CD4-positive, alpha-beta memory T cell (primary cell): ENCODE measurements at regions of chr13 and their contacts with region 1.

Region 1: DNA sequence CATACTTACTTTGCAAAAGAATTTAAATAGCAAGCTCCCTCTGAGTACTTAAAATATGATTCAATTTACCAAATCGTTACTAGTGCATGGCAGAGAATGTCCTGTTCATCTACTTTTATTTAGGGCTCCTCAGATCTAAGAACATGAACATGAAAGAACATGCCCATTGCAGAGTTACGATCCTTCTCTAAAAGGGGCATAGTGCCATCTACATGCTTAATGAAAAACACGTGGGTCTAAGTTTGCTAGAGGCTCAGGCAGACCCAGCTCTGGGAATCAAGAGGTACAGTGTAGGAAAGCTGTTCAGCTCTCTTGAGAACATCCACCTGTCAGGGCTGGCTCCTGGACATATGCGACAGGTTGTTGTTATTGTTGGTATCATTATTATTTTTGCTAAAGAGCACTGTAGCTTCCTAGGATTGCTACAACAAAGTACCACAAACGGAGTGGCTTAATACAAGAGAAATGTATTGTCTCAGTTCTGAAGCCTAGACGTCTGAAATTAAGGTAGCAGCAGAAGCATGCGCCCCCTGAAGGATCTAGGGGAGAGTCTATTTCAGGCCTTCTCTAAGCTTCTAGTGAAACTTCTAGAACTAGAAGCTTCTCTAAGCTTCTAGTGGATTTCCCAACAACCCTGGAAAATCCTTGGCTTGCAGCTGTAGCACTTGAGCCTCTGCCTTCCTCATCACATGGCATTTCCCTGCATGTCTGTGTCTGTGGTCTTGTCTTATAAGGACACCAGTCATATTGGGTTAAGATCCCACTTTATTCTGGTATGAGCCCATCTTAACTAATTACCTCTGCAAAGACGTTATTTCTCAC is 133.9 kb downstream of the DCT start:
- DNase-seq: peak in 4 of 5 donors; percentile 30 to 50 (median 42)
- H3K4me3 ChIP-seq: no peak overlapping the region
- H3K4me3 Mint-ChIP-seq: no peak overlapping the region
- H3K27ac ChIP-seq: no peak overlapping the region
- H3K27ac Mint-ChIP-seq: no peak overlapping the region
- H3K4me1 ChIP-seq: no peaks in the 10 kb centered on the region
- H3K4me1 Mint-ChIP-seq: peaks cover 4 to 6% (median 6%) of the 10 kb centered on the region in 4 donors
- H3K27me3 ChIP-seq: no peaks in the 10 kb centered on the region
- H3K27me3 Mint-ChIP-seq: peaks cover 7 to 13% of the 10 kb centered on the region in 2 donors

Region 2: GRCh38 chr13:93976528-93976927 is 369.1 kb before region 1 on chr13:
- CTCF ChIA-PET with region 1: no interaction called
- POLR2A ChIA-PET with region 1: no interaction called
- intact Hi-C with region 1: loop called (anchors 10 kb)
- DNase-seq: no peak
- H3K4me3 ChIP-seq: no peak overlapping the region
- H3K4me3 Mint-ChIP-seq: no peak overlapping the region
- H3K27ac ChIP-seq: no peak overlapping the region
- H3K27ac Mint-ChIP-seq: no peak overlapping the region
- H3K4me1 ChIP-seq: no peaks in the 10 kb centered on the region
- H3K4me1 Mint-ChIP-seq: no peaks in the 10 kb centered on the region
- H3K27me3 ChIP-seq: no peaks in the 10 kb centered on the region
- H3K27me3 Mint-ChIP-seq: peaks cover 0 to 5% of the 10 kb centered on the region in 2 donors

Region 3: GRCh38 chr13:94173312-94173854 is 172.2 kb before region 1 on chr13:
- CTCF ChIA-PET with region 1: interaction called, 3 read pairs
- POLR2A ChIA-PET with region 1: no interaction called
- intact Hi-C with region 1: loop called (anchors 1 kb)
- DNase-seq: no peak
- H3K4me3 ChIP-seq: no peak overlapping the region
- H3K4me3 Mint-ChIP-seq: no peak overlapping the region
- H3K27ac ChIP-seq: no peak overlapping the region
- H3K27ac Mint-ChIP-seq: no peak overlapping the region
- H3K4me1 ChIP-seq: no peaks in the 10 kb centered on the region
- H3K4me1 Mint-ChIP-seq: peaks cover 0 to under 1% (median under 1%) of the 10 kb centered on the region in 4 donors
- H3K27me3 ChIP-seq: no peaks in the 10 kb centered on the region
- H3K27me3 Mint-ChIP-seq: peaks cover 5 to 10% of the 10 kb centered on the region in 2 donors

Region 4: GRCh38 chr13:94261163-94261562 is 84.4 kb before region 1 on chr13:
- CTCF ChIA-PET with region 1: no interaction called
- POLR2A ChIA-PET with region 1: no interaction called
- intact Hi-C with region 1: loop called (anchors 5 kb)
- DNase-seq: no peak
- H3K4me3 ChIP-seq: no peak overlapping the region
- H3K4me3 Mint-ChIP-seq: no peak overlapping the region
- H3K27ac ChIP-seq: no peak overlapping the region
- H3K27ac Mint-ChIP-seq: no peak overlapping the region
- H3K4me1 ChIP-seq: no peaks in the 10 kb centered on the region
- H3K4me1 Mint-ChIP-seq: peaks cover 0 to 15% (median 6%) of the 10 kb centered on the region in 4 donors
- H3K27me3 ChIP-seq: no peaks in the 10 kb centered on the region
- H3K27me3 Mint-ChIP-seq: peaks cover 0 to 2% of the 10 kb centered on the region in 2 donors

Region 5: GRCh38 chr13:94362411-94362909 is 16.9 kb after region 1 on chr13:
- CTCF ChIA-PET with region 1: interaction called, 33 read pairs
- POLR2A ChIA-PET with region 1: no interaction called
- intact Hi-C with region 1: no loop called
- DNase-seq: peak; percentile 65 to 69 (median 67)
- H3K4me3 ChIP-seq: no peak overlapping the region
- H3K4me3 Mint-ChIP-seq: no peak overlapping the region
- H3K27ac ChIP-seq: no peak overlapping the region
- H3K27ac Mint-ChIP-seq: no peak overlapping the region
- H3K4me1 ChIP-seq: no peaks in the 10 kb centered on the region
- H3K4me1 Mint-ChIP-seq: peaks cover 0 to 3% (median 2%) of the 10 kb centered on the region in 4 donors
- H3K27me3 ChIP-seq: no peaks in the 10 kb centered on the region
- H3K27me3 Mint-ChIP-seq: peaks cover 7 to 11% of the 10 kb centered on the region in 2 donors